ENCODE measurements at regions of chr1 and their contacts with region 1.

Region 1: DNA sequence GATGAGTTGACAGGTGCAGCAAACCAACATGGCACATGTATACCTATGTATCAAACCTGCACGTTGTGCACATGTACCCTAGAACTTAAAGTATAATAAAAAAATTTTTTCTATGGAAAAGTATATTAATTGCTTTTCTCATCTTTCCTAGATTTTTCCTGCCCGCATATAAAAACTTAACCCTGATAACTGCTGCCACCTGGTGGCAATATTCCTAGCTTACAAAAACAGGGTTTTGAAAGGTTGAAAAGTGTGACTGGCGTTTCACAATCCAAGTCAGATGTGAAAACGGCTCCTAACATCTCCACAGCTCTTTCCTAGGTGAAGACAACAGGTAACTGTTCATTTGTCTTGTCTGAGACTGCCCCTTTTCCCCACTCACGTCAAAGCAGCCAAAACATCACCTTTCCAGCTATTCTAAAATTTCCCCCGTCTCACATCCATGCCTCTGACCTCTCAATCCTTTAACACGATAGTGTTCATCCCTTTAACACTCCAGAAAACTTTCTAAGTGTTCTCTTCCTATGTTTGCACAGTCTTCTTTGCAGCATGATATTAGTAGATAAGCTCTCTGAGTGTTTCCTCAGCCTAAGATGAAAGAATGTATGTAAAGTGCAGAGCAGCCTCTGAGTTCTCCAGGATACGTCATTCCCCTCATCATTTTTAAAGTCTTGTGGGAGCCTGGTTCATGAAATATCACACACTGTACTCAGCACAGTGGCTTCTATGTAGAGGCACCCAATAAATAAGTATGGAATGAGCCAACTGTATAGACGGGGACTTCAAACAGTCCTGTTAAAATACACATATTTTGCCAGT is 27.5 kb downstream of the OVGP1 start:
- DNase-seq: peak; percentile 83
- H3K4me3 Mint-ChIP-seq: no peak overlapping the region
- H3K27ac Mint-ChIP-seq: no peak overlapping the region
- H3K4me1 Mint-ChIP-seq: peaks cover 11% of the 10 kb centered on the region
- H3K27me3 Mint-ChIP-seq: peaks cover 38% of the 10 kb centered on the region

Region 2: DNA sequence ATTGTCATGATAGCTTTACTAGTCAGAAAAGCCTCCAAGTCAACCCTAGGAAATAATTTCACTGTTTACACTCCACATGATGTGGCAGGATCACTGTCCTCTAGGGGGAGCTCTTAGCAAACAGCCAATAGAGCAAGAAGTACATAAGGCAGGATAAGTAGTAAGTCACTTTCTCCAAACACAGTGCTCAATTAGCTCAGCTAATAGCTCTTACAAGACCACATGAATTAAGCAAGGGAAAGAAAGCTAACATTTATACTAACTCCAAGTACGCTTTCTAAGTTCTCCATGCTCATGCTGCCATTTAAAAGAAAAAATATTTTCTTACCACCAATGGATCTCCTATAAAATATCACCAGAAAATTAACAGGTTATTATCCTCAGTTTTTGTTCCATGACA is 369.4 kb before region 1 on chr1:
- intact Hi-C with region 1: loop called (anchors 10 kb)
- DNase-seq: peak; percentile 89
- H3K4me3 Mint-ChIP-seq: no peak overlapping the region
- H3K27ac Mint-ChIP-seq: no peak overlapping the region
- H3K4me1 Mint-ChIP-seq: no peaks in the 10 kb centered on the region
- H3K27me3 Mint-ChIP-seq: peaks cover 41% of the 10 kb centered on the region

Region 3: DNA sequence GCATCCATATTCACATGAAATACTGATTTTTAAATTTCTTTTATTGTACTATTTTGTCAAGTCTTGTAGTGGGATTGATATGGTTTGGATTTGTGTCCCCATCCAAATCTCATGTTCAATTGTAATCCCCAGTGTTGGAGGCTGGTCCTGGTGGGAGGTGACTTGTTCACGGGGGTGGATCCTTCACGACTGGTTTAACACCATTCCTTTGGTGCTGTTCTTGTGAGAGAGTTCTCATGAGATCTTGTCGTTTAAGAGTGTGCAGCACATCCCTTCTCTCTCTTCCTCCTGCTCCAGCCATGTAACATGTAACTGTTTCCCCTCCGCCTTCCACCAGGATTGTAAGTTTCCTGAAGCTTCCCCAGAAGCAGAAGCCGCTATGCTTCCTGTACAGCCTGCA is 288.0 kb before region 1 on chr1:
- intact Hi-C with region 1: no loop called
- DNase-seq: no peak
- H3K4me3 Mint-ChIP-seq: no peak overlapping the region
- H3K27ac Mint-ChIP-seq: no peak overlapping the region
- H3K4me1 Mint-ChIP-seq: no peaks in the 10 kb centered on the region
- H3K27me3 Mint-ChIP-seq: no peaks in the 10 kb centered on the region

Region 4: DNA sequence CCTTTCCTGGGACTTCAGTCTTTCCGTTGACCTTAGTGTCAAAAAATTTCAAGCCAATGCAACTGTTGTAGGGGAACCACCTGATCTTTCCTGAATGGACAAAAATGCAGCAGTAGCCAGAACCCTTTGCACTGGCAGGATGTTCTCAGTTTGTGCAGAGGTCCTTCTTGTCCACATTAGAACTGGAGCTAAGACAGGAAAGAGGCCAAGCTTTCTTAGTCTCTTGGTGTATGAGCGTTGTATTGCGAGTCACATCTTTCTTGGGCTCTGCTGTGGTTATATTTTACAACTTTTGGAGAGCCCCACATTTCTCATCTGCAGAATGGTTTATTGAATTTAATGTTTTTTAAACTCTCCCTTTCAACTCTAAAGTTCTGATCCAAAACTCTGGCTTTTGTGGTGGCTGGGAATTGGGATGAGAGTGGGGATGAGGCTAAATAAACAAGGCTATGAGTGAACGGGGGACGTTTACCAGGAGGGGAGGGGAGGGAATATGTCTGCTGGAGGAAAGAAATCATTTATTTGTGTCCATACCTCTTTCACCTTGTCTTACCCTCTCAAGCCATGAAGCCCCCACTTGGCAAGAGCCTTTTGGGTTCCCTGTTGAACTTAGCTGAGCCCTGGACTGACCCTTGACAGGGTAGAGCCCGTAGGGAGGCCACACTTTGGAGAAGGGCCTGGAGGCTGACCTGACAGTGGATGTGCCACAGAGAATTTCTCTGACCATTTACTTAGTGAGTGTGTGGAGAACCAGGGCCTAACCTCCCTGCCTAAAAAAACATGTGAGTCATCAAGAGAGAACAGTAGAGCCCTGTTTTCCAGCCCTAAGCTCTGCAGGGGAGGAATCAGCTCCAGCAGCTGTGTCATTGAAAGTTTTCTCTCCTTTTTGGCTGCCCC is 171.9 kb before region 1 on chr1:
- intact Hi-C with region 1: loop called (anchors 1 kb)
- DNase-seq: no peak
- H3K4me3 Mint-ChIP-seq: peak overlapping the region; percentile 36
- H3K27ac Mint-ChIP-seq: peak overlapping the region; percentile 87
- H3K4me1 Mint-ChIP-seq: peaks cover 66% of the 10 kb centered on the region
- H3K27me3 Mint-ChIP-seq: no peaks in the 10 kb centered on the region

Region 5: GRCh38 chr1:111275079-111275478 is 124.9 kb before region 1 on chr1:
- intact Hi-C with region 1: loop called (anchors 5 kb)
- DNase-seq: peak; percentile 69
- H3K4me3 Mint-ChIP-seq: no peak overlapping the region
- H3K27ac Mint-ChIP-seq: peak overlapping the region; percentile 58
- H3K4me1 Mint-ChIP-seq: peaks cover 23% of the 10 kb centered on the region
- H3K27me3 Mint-ChIP-seq: peaks cover 25% of the 10 kb centered on the region

Region 6: DNA sequence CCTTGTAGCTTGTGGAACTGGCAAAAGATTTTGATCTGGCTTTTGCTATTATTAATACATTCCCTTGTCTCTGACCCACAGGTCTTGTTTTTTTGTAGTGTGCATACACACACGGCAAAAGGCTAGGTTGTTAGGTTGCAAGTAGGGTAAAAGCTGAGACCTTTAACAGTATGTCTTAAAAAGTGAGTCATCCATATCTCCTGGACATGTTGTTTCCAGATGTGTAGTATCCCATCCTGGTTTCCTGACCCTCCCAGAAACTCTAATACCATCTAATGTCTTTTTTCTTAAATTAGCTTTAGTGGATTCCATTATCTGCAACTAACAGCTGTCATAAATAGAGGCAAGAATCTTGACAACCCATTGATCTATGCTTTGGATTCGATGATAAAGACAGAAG is 12.8 kb after region 1 on chr1:
- intact Hi-C with region 1: no loop called
- DNase-seq: no peak
- H3K4me3 Mint-ChIP-seq: no peak overlapping the region
- H3K27ac Mint-ChIP-seq: no peak overlapping the region
- H3K4me1 Mint-ChIP-seq: peaks cover 2% of the 10 kb centered on the region
- H3K27me3 Mint-ChIP-seq: peaks cover 17% of the 10 kb centered on the region

Region 7: DNA sequence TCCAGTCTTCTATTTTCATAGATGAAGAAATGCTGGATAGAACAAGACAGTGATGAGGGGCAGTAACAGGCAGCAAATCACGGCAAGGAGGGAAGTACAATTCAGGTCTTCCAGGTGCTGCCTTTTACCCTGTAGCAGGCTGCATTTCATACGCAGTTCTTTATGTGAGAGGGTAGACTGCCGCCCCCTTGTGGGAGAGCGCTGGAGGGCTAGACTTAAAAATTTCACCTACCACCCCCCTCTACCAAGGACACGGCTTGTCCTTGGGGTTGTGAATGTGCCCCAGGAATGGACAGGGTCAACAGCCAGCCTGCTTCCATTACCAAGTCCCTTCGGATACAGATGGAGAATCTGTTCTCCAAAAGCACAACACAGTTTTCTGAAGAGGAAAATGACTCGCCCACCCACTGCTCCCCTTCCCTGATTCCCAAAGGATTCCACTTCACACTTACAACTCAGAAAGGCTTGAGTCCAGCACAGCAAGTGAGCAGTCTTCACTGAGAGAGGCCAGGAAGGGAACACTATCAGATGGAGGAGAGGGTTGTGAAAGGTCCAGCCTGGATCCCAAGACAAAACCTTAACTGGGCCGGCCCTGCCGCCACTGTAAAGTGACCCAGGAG is 41.7 kb after region 1 on chr1:
- intact Hi-C with region 1: loop called (anchors 5 kb)
- DNase-seq: peak; percentile 87
- H3K4me3 Mint-ChIP-seq: no peak overlapping the region
- H3K27ac Mint-ChIP-seq: no peak overlapping the region
- H3K4me1 Mint-ChIP-seq: peaks cover 26% of the 10 kb centered on the region
- H3K27me3 Mint-ChIP-seq: no peaks in the 10 kb centered on the region

Measured in activated CD4-positive, alpha-beta T cell treated with anti-CD3 and anti-CD28 coated beads, Interleukin-2, amount 10 ng/mL, durations not matched to agents 24 days and 14 days (primary cell).